Right cardiac atrium (tissue), 5 donors: ENCODE measurements at regions of chr10 and their contacts with region 1.

Region 1: DNA sequence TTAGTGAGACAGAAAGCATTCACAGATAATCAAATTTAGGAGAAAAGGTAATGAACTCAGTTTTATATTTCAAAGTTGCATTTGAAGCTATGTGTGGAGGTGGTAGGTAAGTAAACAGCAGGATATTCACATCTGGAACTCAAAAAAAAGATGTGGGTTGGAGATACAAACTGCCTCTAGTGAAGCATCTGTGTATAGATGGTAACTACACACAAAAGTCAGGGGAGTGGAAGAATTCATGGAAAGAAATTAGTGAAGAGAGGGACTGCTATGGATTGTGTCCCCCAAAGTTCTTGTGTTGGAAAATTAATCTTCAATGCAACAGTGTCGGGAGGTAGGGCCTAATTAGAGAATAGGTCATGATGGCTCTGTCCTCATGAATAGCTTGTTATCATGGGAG is 18.3 kb upstream of the WAC start:
- DNase-seq: no peak
- ATAC-seq: no peak
- H3K4me3 ChIP-seq: no peak overlapping the region
- H3K27ac ChIP-seq: no peak overlapping the region
- H3K4me1 ChIP-seq: no peaks in the 10 kb centered on the region
- H3K27me3 ChIP-seq: no peaks in the 10 kb centered on the region

Region 2: GRCh38 chr10:28444031-28444430 is 70.6 kb before region 1 on chr10:
- intact Hi-C with region 1: loop called in 1 of 4 experiments (anchors 10 kb)
- DNase-seq: no peak
- ATAC-seq: no peak
- H3K4me3 ChIP-seq: no peak overlapping the region
- H3K27ac ChIP-seq: no peak overlapping the region
- H3K4me1 ChIP-seq: no peaks in the 10 kb centered on the region
- H3K27me3 ChIP-seq: no peaks in the 10 kb centered on the region